ENCODE measurements at regions of chr2 and their contacts with region 1.

Region 1: DNA sequence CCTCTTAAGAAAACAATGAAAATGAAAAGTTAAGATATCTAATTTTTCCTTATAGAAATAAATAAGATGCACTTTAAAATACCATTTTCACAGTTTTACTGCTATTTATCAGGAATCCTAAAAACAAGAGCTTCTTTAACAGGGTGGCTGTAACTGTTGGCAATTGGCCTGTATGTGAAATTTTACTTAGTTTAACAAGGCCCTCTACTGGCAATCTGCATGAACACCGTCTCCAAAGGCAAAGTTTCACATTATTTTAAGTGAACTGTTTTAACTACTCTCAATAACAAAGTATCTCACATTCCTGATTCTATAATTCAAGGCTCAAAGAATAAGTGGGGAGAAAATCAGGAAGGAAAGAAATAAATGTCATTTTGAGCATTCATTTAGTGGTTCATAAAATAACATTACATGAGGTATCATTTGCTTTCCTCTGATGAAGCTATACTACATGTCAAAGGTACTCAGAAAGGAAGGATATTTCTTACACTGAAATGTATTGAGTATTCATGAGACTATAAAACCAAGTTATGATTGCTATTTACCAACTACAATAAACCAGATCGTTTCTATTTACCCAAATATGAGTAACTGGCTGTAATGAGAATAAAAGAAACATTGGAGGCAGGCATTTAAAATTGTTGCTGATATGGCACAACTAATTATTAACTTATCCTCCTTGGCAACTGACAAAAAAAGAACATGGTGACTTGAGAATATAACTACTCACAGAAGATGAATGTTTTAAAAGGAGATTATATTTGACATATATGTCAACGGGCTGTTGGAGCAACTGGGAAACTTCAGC is 7.0 kb downstream of the NCKAP5 start:
- DNase-seq: peak; percentile 74
- H3K4me3 ChIP-seq: no peak overlapping the region
- H3K27ac ChIP-seq: no peak overlapping the region
- H3K4me1 ChIP-seq: no peaks in the 10 kb centered on the region
- H3K27me3 ChIP-seq: no peaks in the 10 kb centered on the region
- CTCF ChIP-seq: peak; percentile 38 to 52
- POLR2A ChIP-seq: no peak

Region 2: GRCh38 chr2:132547074-132547687 is 1014.1 kb before region 1 on chr2:
- CTCF ChIA-PET with region 1: interaction called, 51 read pairs
- POLR2A ChIA-PET with region 1: no interaction called
- dilution Hi-C with region 1: no loop called
- intact Hi-C with region 1: loop called (anchors 1 kb)
- DNase-seq: peak; percentile 56
- H3K4me3 ChIP-seq: no peak overlapping the region
- H3K27ac ChIP-seq: no peak overlapping the region
- H3K4me1 ChIP-seq: no peaks in the 10 kb centered on the region
- H3K27me3 ChIP-seq: no peaks in the 10 kb centered on the region
- CTCF ChIP-seq: peak; percentile 53 to 58
- POLR2A ChIP-seq: no peak

Region 3: DNA sequence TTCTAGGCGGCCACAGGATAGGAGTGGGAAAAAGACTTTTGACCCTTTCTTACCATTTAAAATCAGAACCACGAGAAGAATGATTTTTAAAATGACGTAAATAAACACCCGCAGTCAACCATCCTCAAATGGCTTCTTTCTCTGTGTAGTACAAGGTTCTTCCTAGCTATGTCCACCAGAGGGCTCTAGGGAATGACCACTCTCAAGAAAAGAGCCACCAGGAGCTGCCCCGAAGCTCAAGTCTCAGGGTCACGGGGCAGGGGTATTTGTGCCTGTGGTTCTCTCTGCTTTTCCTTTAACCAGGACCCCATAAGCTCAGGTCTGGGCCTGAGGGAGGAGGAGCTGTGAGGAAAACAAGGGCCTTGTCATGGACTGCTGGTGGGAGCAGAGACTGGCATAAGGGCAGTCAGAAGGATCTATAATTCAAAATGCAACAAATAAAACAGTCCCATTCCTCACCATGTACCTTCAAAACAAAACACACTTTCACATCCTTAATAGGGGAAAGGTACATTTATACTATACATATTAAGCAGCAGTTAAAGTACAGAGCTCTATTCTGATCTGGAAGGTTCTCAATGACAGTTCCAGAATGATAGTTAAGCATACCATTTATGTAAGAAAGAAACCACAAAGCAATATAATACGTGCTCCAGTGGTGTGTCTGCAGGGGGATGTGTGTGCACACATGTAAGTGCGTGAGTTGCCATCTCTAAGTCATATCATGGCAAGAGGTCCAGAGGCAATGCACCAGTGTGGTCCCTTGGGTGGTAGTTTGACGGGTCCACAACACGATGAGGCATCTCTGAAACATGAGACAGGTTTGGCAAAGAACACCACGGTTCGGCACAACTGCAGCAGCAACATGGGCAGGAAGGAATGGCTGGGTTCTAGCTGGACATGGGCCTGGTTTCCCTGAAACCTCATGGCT is 909.9 kb before region 1 on chr2:
- CTCF ChIA-PET with region 1: interaction called, 10 read pairs
- POLR2A ChIA-PET with region 1: no interaction called
- dilution Hi-C with region 1: no loop called
- intact Hi-C with region 1: no loop called
- DNase-seq: peak; percentile 73
- H3K4me3 ChIP-seq: no peak overlapping the region
- H3K27ac ChIP-seq: no peak overlapping the region
- H3K4me1 ChIP-seq: peaks cover 2% of the 10 kb centered on the region
- H3K27me3 ChIP-seq: no peaks in the 10 kb centered on the region
- CTCF ChIP-seq: peak; percentile 56 to 80
- POLR2A ChIP-seq: no peak

Region 4: GRCh38 chr2:132670496-132671150 is 890.6 kb before region 1 on chr2:
- CTCF ChIA-PET with region 1: interaction called, 6 read pairs
- POLR2A ChIA-PET with region 1: no interaction called
- dilution Hi-C with region 1: no loop called
- intact Hi-C with region 1: loop called (anchors 2 kb)
- DNase-seq: peak; percentile 44
- H3K4me3 ChIP-seq: peak overlapping the region; percentile 55 to 76 (median 75)
- H3K27ac ChIP-seq: peak overlapping the region; percentile 69
- H3K4me1 ChIP-seq: peaks cover 30% of the 10 kb centered on the region
- H3K27me3 ChIP-seq: no peaks in the 10 kb centered on the region
- CTCF ChIP-seq: no peak
- POLR2A ChIP-seq: peak; percentile 54

Region 5: GRCh38 chr2:133193544-133194361 is 367.5 kb before region 1 on chr2:
- CTCF ChIA-PET with region 1: no interaction called
- POLR2A ChIA-PET with region 1: no interaction called
- dilution Hi-C with region 1: no loop called
- intact Hi-C with region 1: loop called (anchors 5 kb)
- DNase-seq: peak; percentile 38
- H3K4me3 ChIP-seq: no peak overlapping the region
- H3K27ac ChIP-seq: no peak overlapping the region
- H3K4me1 ChIP-seq: peaks cover 3% of the 10 kb centered on the region
- H3K27me3 ChIP-seq: no peaks in the 10 kb centered on the region
- CTCF ChIP-seq: no peak
- POLR2A ChIP-seq: no peak

Region 6: DNA sequence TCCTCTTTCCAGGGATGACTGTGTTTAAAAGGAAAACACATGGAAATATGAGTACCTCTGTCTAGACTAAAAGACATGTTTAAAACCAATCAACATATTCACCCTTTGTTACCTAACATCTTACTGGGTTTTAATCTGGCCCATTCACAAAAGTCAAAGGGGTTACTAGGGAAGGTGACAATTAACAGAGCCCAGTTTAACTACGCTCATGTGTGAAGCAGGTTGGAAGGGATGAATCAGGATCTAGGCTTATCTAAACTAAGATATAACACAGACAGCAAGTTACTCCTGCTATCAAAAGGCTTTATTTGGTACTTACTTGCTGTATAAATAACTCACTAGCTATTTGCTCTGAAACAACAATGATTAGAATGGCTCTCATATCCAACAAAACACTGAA is 330.0 kb before region 1 on chr2:
- CTCF ChIA-PET with region 1: no interaction called
- POLR2A ChIA-PET with region 1: no interaction called
- dilution Hi-C with region 1: no loop called
- intact Hi-C with region 1: no loop called
- DNase-seq: peak; percentile 16
- H3K4me3 ChIP-seq: no peak overlapping the region
- H3K27ac ChIP-seq: no peak overlapping the region
- H3K4me1 ChIP-seq: peaks cover 27% of the 10 kb centered on the region
- H3K27me3 ChIP-seq: no peaks in the 10 kb centered on the region
- CTCF ChIP-seq: no peak
- POLR2A ChIP-seq: no peak

Region 7: GRCh38 chr2:133517876-133518275 is 43.4 kb before region 1 on chr2:
- CTCF ChIA-PET with region 1: interaction called, 27 read pairs
- POLR2A ChIA-PET with region 1: no interaction called
- dilution Hi-C with region 1: no loop called
- intact Hi-C with region 1: no loop called
- DNase-seq: no peak
- H3K4me3 ChIP-seq: no peak overlapping the region
- H3K27ac ChIP-seq: no peak overlapping the region
- H3K4me1 ChIP-seq: no peaks in the 10 kb centered on the region
- H3K27me3 ChIP-seq: peaks cover 0 to 1% of the 10 kb centered on the region in 2 experiments
- CTCF ChIP-seq: no peak
- POLR2A ChIP-seq: no peak

Region 8: DNA sequence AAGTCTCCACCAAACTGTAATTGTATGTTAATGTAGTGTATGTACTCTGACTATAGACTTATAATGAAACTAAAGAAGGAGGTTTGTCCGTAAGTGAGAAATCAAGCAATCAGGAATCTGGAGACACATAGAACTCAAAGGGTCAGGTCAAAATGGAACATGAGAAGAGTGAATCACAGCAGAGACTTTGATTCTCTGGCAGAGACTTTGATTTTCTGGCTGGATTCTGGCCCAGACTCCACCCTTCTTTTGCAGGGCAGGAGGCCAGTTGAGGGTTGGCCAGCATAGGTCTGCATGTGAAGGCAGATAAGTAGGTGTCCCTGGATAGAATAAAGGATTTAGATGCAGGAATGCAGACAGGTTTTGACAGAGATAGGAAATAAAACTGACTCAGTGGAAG is 18.0 kb after region 1 on chr2:
- CTCF ChIA-PET with region 1: interaction called, 15 read pairs
- POLR2A ChIA-PET with region 1: no interaction called
- dilution Hi-C with region 1: no loop called
- intact Hi-C with region 1: no loop called
- DNase-seq: peak; percentile 93
- H3K4me3 ChIP-seq: no peak overlapping the region
- H3K27ac ChIP-seq: peak overlapping the region; percentile 45
- H3K4me1 ChIP-seq: peaks cover 40% of the 10 kb centered on the region
- H3K27me3 ChIP-seq: no peaks in the 10 kb centered on the region
- CTCF ChIP-seq: no peak
- POLR2A ChIP-seq: peak; percentile 27

Region 9: GRCh38 chr2:134173338-134174016 is 612.2 kb after region 1 on chr2:
- CTCF ChIA-PET with region 1: no interaction called
- POLR2A ChIA-PET with region 1: no interaction called
- dilution Hi-C with region 1: no loop called
- intact Hi-C with region 1: no loop called
- DNase-seq: no peak
- H3K4me3 ChIP-seq: no peak overlapping the region
- H3K27ac ChIP-seq: no peak overlapping the region
- H3K4me1 ChIP-seq: peaks cover 34% of the 10 kb centered on the region
- H3K27me3 ChIP-seq: no peaks in the 10 kb centered on the region
- CTCF ChIP-seq: no peak
- POLR2A ChIP-seq: no peak

Measured in endothelial cell of umbilical vein (primary cell).